CD4-positive, alpha-beta memory T cell (primary cell): ENCODE measurements at regions of chr9 and their contacts with region 1.

Region 1: DNA sequence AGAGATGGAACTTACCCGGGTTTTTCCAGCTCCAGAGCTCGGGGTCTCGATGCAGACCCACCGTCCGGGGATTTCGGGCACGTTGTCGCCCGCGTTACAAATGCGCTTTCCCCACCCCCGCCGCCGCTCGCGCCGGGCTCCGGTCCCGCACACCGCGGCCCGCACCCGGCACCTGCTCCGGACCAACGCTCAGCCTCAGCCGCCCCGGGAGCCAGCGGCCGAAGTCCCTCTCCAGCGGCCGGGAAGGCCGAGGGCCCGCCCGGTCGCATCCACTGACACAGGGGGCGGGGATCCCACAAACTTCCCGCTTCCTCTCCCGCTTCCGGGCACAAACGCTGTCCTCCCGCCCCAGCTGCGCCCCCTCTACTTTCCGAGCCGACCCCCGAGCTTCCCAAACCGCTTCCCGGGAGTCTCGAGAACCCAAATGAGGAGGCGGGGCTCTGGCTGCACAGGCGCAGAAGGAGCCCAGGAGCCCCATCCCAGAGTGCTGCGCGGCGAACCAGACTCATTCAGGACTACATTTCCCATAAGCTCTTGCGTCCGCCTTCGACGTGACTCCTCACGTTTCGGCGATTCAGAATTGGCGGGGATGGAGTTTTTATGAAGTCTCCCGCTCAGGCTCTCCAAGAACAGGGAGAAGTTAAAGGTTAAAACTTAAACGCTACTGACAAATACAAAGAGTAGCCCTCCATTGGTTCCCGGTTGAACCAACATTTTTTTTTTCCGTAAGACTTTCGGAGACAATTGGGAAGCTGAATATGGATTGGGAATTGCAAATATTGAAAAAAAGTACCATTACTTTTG is at the start of gene ZNF782:
- DNase-seq: peak; percentile 80 to 84 (median 81)
- H3K4me3 ChIP-seq: peak within 1 kb of the TSS; percentile 4 to 84
- H3K4me3 Mint-ChIP-seq: peak within 1 kb of the TSS; percentile 100
- H3K27ac ChIP-seq: peak within 1 kb of the TSS; percentile 73
- H3K27ac Mint-ChIP-seq: peak within 1 kb of the TSS; percentile 86 to 100 (median 99)
- H3K4me1 ChIP-seq: peaks cover 32% of the 10 kb centered on the region
- H3K4me1 Mint-ChIP-seq: peaks cover 26 to 53% (median 34%) of the 10 kb centered on the region in 4 donors
- H3K27me3 ChIP-seq: no peaks in the 10 kb centered on the region
- H3K27me3 Mint-ChIP-seq: peaks cover 3% of the 10 kb centered on the region in 2 donors
- total RNA-seq, gene ZNF782: 14.2 to 14.7 TPM

Region 2: GRCh38 chr9:96868709-96869108 is 14.4 kb after region 1 on chr9:
- CTCF ChIA-PET with region 1: interaction called, 16 read pairs
- POLR2A ChIA-PET with region 1: no interaction called
- intact Hi-C with region 1: no loop called
- DNase-seq: no peak
- H3K4me3 ChIP-seq: no peak overlapping the region
- H3K4me3 Mint-ChIP-seq: no peak overlapping the region
- H3K27ac ChIP-seq: no peak overlapping the region
- H3K27ac Mint-ChIP-seq: no peak overlapping the region
- H3K4me1 ChIP-seq: no peaks in the 10 kb centered on the region
- H3K4me1 Mint-ChIP-seq: no peaks in the 10 kb centered on the region
- H3K27me3 ChIP-seq: no peaks in the 10 kb centered on the region
- H3K27me3 Mint-ChIP-seq: peaks cover 0 to 14% of the 10 kb centered on the region in 2 donors

Region 3: GRCh38 chr9:97038909-97039781 is 184.9 kb after region 1 on chr9 and contains the start of gene CTSV:
- CTCF ChIA-PET with region 1: no interaction called
- POLR2A ChIA-PET with region 1: no interaction called
- intact Hi-C with region 1: loop called (anchors 10 kb)
- DNase-seq: peak; percentile 53 to 69 (median 59)
- H3K4me3 ChIP-seq: peak within 1 kb of the TSS in 1 of 2 donors; percentile 43
- H3K4me3 Mint-ChIP-seq: peak within 1 kb of the TSS; percentile 62 to 81 (median 78)
- H3K27ac ChIP-seq: no peak within 1 kb of the TSS
- H3K27ac Mint-ChIP-seq: no peak within 1 kb of the TSS
- H3K4me1 ChIP-seq: peaks cover 10% of the 10 kb centered on the region
- H3K4me1 Mint-ChIP-seq: peaks cover 3 to 12% (median 7%) of the 10 kb centered on the region in 4 donors
- H3K27me3 ChIP-seq: peaks cover 4% of the 10 kb centered on the region
- H3K27me3 Mint-ChIP-seq: peaks cover 38 to 45% of the 10 kb centered on the region in 2 donors
- total RNA-seq, gene CTSV: not detected

Region 4: DNA sequence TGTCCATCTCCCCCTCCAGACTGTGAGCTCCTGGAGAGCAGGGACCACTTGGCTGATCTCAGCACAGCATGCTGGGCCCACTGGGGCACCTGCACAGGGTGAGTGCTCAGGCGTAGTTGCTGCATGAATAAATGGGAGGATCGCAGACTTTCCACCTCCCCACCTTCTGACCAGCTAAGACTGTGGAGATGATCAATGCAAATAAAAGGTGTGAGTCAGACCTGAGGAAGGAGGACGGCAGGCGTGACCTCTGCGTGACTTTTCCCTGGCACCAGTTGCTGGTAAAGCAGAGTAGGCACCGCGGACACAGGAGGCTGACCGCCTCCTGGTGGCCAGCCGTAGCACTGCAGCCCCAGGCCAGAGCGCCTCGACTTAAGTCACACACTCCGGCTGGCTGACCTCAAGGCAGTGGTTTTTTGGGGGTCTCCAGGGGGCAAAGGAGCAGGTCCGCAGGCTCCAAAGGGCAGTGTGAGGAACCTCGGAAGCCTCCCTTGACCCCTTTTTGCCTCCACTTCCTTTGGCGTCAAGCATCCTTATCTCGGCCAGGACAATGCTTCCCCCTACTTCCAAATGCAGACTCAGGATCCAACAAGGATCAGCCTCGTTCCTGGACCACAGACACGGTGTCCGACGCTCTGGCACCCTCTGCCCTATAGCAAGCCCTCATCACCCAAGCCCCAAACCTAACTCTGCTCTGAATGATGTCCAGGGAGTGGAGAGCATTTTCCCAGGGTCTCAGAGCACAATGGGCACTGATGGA is 544.9 kb after region 1 on chr9:
- CTCF ChIA-PET with region 1: interaction called, 118 read pairs
- POLR2A ChIA-PET with region 1: interaction called, 3 read pairs
- intact Hi-C with region 1: no loop called
- DNase-seq: peak; percentile 53 to 63 (median 55)
- H3K4me3 ChIP-seq: no peak overlapping the region
- H3K4me3 Mint-ChIP-seq: no peak overlapping the region
- H3K27ac ChIP-seq: no peak overlapping the region
- H3K27ac Mint-ChIP-seq: no peak overlapping the region
- H3K4me1 ChIP-seq: no peaks in the 10 kb centered on the region
- H3K4me1 Mint-ChIP-seq: peaks cover 0 to 2% (median 1%) of the 10 kb centered on the region in 4 donors
- H3K27me3 ChIP-seq: no peaks in the 10 kb centered on the region
- H3K27me3 Mint-ChIP-seq: peaks cover 0 to 2% of the 10 kb centered on the region in 2 donors

Region 5: DNA sequence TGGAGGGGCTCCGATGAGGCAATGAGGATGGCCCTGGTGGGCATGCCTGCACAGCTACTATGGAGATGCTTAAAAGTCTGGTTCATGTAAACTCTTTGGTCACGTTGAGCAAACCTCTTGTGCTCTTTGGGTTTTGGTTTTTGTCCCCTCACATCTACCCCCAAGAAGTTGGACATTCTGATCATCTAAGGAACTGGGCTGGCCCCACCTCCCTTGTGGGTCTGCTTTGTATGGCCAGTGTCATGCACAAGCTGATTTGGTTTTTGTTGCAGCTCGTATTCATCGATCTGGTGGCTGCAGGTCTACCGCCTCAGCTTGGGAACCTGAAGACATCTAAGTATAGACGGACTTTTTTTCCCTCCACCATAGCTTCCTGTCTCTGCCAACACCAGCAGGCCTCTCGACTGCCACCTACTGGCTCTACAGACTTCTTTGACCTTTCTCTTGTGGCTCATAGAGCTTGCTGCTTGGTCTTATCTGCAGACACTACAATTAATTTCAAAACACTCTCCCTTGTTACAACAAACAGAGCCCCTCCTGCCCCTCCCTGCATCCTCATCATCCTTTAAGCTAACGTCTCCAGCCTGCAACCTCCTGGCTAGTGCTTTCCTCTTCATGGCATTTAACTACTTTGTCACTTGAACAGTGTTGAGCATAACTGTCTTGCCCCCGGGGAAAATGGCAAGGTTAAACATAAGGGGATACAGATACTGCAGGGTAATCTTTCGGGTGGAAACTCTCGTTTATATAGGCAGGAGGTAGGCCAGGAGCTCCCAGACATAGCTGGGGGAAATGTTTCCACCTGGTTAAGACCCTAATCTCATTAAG is 744.4 kb after region 1 on chr9:
- CTCF ChIA-PET with region 1: interaction called, 39 read pairs
- POLR2A ChIA-PET with region 1: no interaction called
- intact Hi-C with region 1: no loop called
- DNase-seq: peak; percentile 65 to 71 (median 68)
- H3K4me3 ChIP-seq: no peak overlapping the region
- H3K4me3 Mint-ChIP-seq: peak overlapping the region in 5 of 8 donors; percentile 49 to 73 (median 54)
- H3K27ac ChIP-seq: no peak overlapping the region
- H3K27ac Mint-ChIP-seq: peak overlapping the region in 2 of 7 donors; percentile 33 to 79
- H3K4me1 ChIP-seq: no peaks in the 10 kb centered on the region
- H3K4me1 Mint-ChIP-seq: peaks cover 7 to 9% (median 7%) of the 10 kb centered on the region in 4 donors
- H3K27me3 ChIP-seq: no peaks in the 10 kb centered on the region
- H3K27me3 Mint-ChIP-seq: no peaks in the 10 kb centered on the region

Region 6: GRCh38 chr9:97632985-97633858 is 778.9 kb after region 1 on chr9 and contains the starts of genes NCBP1 and TSTD2:
- CTCF ChIA-PET with region 1: interaction called, 9 read pairs
- POLR2A ChIA-PET with region 1: interaction called, 6 read pairs
- intact Hi-C with region 1: loop called (anchors 1 kb)
- DNase-seq: peak; percentile 96 to 97 (median 97)
- H3K4me3 ChIP-seq: peak within 1 kb of the TSS; percentile 80 to 87
- H3K4me3 Mint-ChIP-seq: peak within 1 kb of the TSS; percentile 96 to 100 (median 98)
- H3K27ac ChIP-seq: peak within 1 kb of the TSS; percentile 92
- H3K27ac Mint-ChIP-seq: peak within 1 kb of the TSS; percentile 96 to 100 (median 100)
- H3K4me1 ChIP-seq: peaks cover 52% of the 10 kb centered on the region
- H3K4me1 Mint-ChIP-seq: peaks cover 37 to 65% (median 51%) of the 10 kb centered on the region in 4 donors
- H3K27me3 ChIP-seq: no peaks in the 10 kb centered on the region
- H3K27me3 Mint-ChIP-seq: no peaks in the 10 kb centered on the region
- total RNA-seq, gene NCBP1: 40.7 to 50.8 TPM
- total RNA-seq, gene TSTD2: 17.8 to 18.4 TPM